CD8-positive, alpha-beta T cell (primary cell): ENCODE measurements at regions of chr2 and their contacts with region 1.

Region 1: DNA sequence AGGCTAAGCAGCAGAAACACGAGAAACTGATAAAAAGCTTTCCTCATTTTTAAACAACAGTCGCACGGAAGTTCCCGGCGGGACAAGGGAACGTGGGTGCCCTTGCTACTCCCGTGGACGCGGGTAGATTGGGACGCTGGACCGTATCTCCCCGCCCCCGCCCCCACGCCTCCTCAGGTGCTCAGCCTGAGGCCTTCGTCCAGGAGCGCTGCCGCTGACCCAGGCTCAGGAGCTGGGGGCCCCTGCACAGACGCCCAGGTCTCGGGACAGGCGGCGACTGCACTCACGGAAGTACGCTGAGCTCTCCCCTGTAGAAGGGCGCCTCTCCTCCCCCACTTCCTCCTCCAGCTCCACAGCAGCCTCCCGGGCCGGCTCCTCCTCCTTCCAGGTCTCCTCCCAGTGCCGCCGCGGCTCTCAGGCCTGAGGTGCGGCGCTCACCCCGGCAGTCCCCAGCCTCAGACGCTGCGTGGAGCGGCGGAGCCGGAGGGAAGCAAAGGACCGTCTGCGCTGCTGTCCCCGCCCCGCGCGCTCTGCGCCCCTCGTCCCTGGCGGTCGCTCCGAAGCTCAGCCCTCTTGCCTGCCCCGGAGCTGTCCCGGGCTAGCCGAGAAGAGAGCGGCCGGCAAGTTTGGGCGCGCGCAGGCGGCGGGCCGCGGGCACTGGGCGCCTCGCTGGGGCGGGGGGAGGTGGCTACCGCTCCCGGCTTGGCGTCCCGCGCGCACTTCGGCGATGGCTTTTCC is at the start of gene ITGAV:
- DNase-seq: peak; percentile 63 to 90 (median 80)
- ATAC-seq: peak; percentile 91
- H3K4me3 ChIP-seq: peak within 1 kb of the TSS; percentile 75 to 95
- H3K4me3 Mint-ChIP-seq: peak within 1 kb of the TSS; percentile 84
- H3K27ac ChIP-seq: peak within 1 kb of the TSS; percentile 41 to 81
- H3K27ac Mint-ChIP-seq: peak within 1 kb of the TSS; percentile 88
- H3K4me1 ChIP-seq: peaks cover 13% of the 10 kb centered on the region
- H3K4me1 Mint-ChIP-seq: peaks cover 32% of the 10 kb centered on the region
- H3K27me3 ChIP-seq: no peaks in the 10 kb centered on the region
- H3K27me3 Mint-ChIP-seq: peaks cover 2% of the 10 kb centered on the region
- CTCF ChIP-seq: no peak
- total RNA-seq, gene ITGAV: 3.6 to 4.9 TPM

Region 2: GRCh38 chr2:185676317-185676716 is 913.5 kb before region 1 on chr2:
- CTCF ChIA-PET with region 1: no interaction called
- POLR2A ChIA-PET with region 1: no interaction called
- intact Hi-C with region 1: no loop called
- DNase-seq: no peak
- ATAC-seq: no peak
- H3K4me3 ChIP-seq: no peak overlapping the region
- H3K4me3 Mint-ChIP-seq: no peak overlapping the region
- H3K27ac ChIP-seq: no peak overlapping the region
- H3K27ac Mint-ChIP-seq: no peak overlapping the region
- H3K4me1 ChIP-seq: no peaks in the 10 kb centered on the region
- H3K4me1 Mint-ChIP-seq: no peaks in the 10 kb centered on the region
- H3K27me3 ChIP-seq: no peaks in the 10 kb centered on the region
- H3K27me3 Mint-ChIP-seq: no peaks in the 10 kb centered on the region
- CTCF ChIP-seq: no peak

Region 3: GRCh38 chr2:186205254-186205911 is 384.4 kb before region 1 on chr2:
- CTCF ChIA-PET with region 1: no interaction called
- POLR2A ChIA-PET with region 1: no interaction called
- intact Hi-C with region 1: no loop called
- DNase-seq: no peak
- ATAC-seq: no peak
- H3K4me3 ChIP-seq: no peak overlapping the region
- H3K4me3 Mint-ChIP-seq: no peak overlapping the region
- H3K27ac ChIP-seq: no peak overlapping the region
- H3K27ac Mint-ChIP-seq: no peak overlapping the region
- H3K4me1 ChIP-seq: no peaks in the 10 kb centered on the region
- H3K4me1 Mint-ChIP-seq: peaks cover 2% of the 10 kb centered on the region
- H3K27me3 ChIP-seq: no peaks in the 10 kb centered on the region
- H3K27me3 Mint-ChIP-seq: no peaks in the 10 kb centered on the region
- CTCF ChIP-seq: no peak

Region 4: GRCh38 chr2:186485871-186486650 is 103.7 kb before region 1 on chr2 and contains the start of gene ZC3H15:
- CTCF ChIA-PET with region 1: no interaction called
- POLR2A ChIA-PET with region 1: interaction called, 16 read pairs
- intact Hi-C with region 1: loop called (anchors 1 to 5 kb)
- DNase-seq: peak; percentile 93 to 99 (median 96)
- ATAC-seq: peak; percentile 91
- H3K4me3 ChIP-seq: peak within 1 kb of the TSS; percentile 81 to 92
- H3K4me3 Mint-ChIP-seq: peak within 1 kb of the TSS; percentile 98
- H3K27ac ChIP-seq: peak within 1 kb of the TSS; percentile 95 to 96
- H3K27ac Mint-ChIP-seq: peak within 1 kb of the TSS; percentile 100
- H3K4me1 ChIP-seq: peaks cover 43% of the 10 kb centered on the region
- H3K4me1 Mint-ChIP-seq: peaks cover 69% of the 10 kb centered on the region
- H3K27me3 ChIP-seq: no peaks in the 10 kb centered on the region
- H3K27me3 Mint-ChIP-seq: no peaks in the 10 kb centered on the region
- CTCF ChIP-seq: no peak
- total RNA-seq, gene ZC3H15: 146 to 151 TPM

Region 5: DNA sequence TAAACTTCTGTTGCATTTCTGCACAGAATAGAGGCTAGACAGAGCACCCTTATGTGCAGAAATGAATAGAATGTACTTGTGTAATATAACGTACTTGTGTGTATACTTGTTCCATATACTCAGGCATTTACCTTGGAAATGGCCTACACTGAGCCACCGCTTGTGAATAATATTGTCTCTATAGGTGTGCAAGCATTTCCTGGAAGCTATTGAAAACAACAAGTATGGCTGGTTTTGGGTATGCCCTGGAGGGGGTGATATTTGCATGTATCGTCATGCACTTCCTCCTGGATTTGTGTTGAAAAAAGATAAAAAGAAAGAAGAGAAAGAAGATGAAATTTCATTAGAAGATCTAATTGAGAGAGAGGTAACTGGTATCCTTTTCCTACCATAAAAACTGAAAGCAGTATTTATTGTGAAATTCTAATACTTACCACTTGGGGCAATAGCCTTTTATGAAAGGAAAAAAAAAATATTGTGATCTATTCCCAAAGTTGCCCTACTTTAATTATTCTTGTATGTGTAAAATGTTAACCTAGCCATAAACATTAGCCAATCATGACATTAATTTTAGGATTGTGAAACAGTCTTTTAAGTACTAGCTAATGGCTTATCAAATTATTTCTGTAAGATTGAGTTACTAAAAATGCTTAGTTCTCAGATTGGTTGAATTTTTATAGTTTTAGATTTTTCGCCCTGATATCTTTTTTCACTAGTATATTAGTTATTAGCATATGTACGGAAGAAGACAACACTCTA is 85.8 kb before region 1 on chr2:
- CTCF ChIA-PET with region 1: no interaction called
- POLR2A ChIA-PET with region 1: interaction called, 3 read pairs
- intact Hi-C with region 1: loop called in 1 of 2 experiments (anchors 5 kb)
- DNase-seq: peak in 2 of 9 experiments; percentile 23 to 48
- ATAC-seq: peak; percentile 79
- H3K4me3 ChIP-seq: no peak overlapping the region
- H3K4me3 Mint-ChIP-seq: no peak overlapping the region
- H3K27ac ChIP-seq: no peak overlapping the region
- H3K27ac Mint-ChIP-seq: no peak overlapping the region
- H3K4me1 ChIP-seq: no peaks in the 10 kb centered on the region
- H3K4me1 Mint-ChIP-seq: peaks cover 10% of the 10 kb centered on the region
- H3K27me3 ChIP-seq: no peaks in the 10 kb centered on the region
- H3K27me3 Mint-ChIP-seq: no peaks in the 10 kb centered on the region
- CTCF ChIP-seq: peak; percentile 77

Region 6: GRCh38 chr2:186544255-186544675 is 45.5 kb before region 1 on chr2:
- CTCF ChIA-PET with region 1: no interaction called
- POLR2A ChIA-PET with region 1: interaction called, 3 read pairs
- intact Hi-C with region 1: loop called in 1 of 2 experiments (anchors 1 kb)
- DNase-seq: no peak
- ATAC-seq: no peak
- H3K4me3 ChIP-seq: no peak overlapping the region
- H3K4me3 Mint-ChIP-seq: no peak overlapping the region
- H3K27ac ChIP-seq: no peak overlapping the region
- H3K27ac Mint-ChIP-seq: no peak overlapping the region
- H3K4me1 ChIP-seq: no peaks in the 10 kb centered on the region
- H3K4me1 Mint-ChIP-seq: no peaks in the 10 kb centered on the region
- H3K27me3 ChIP-seq: no peaks in the 10 kb centered on the region
- H3K27me3 Mint-ChIP-seq: peaks cover 10% of the 10 kb centered on the region
- CTCF ChIP-seq: no peak

Region 7: GRCh38 chr2:186629250-186629996 is 39.6 kb after region 1 on chr2:
- CTCF ChIA-PET with region 1: no interaction called
- POLR2A ChIA-PET with region 1: no interaction called
- intact Hi-C with region 1: loop called in 1 of 2 experiments (anchors 5 kb)
- DNase-seq: no peak
- ATAC-seq: no peak
- H3K4me3 ChIP-seq: no peak overlapping the region
- H3K4me3 Mint-ChIP-seq: no peak overlapping the region
- H3K27ac ChIP-seq: no peak overlapping the region
- H3K27ac Mint-ChIP-seq: no peak overlapping the region
- H3K4me1 ChIP-seq: no peaks in the 10 kb centered on the region
- H3K4me1 Mint-ChIP-seq: no peaks in the 10 kb centered on the region
- H3K27me3 ChIP-seq: no peaks in the 10 kb centered on the region
- H3K27me3 Mint-ChIP-seq: no peaks in the 10 kb centered on the region
- CTCF ChIP-seq: no peak

Region 8: GRCh38 chr2:186641807-186642321 is 52.1 kb after region 1 on chr2:
- CTCF ChIA-PET with region 1: interaction called, 5 read pairs
- POLR2A ChIA-PET with region 1: no interaction called
- intact Hi-C with region 1: loop called in 1 of 2 experiments (anchors 2 kb)
- DNase-seq: peak in 6 of 9 experiments; percentile 9 to 62 (median 17)
- ATAC-seq: peak; percentile 73
- H3K4me3 ChIP-seq: no peak overlapping the region
- H3K4me3 Mint-ChIP-seq: no peak overlapping the region
- H3K27ac ChIP-seq: no peak overlapping the region
- H3K27ac Mint-ChIP-seq: no peak overlapping the region
- H3K4me1 ChIP-seq: no peaks in the 10 kb centered on the region
- H3K4me1 Mint-ChIP-seq: peaks cover 1% of the 10 kb centered on the region
- H3K27me3 ChIP-seq: no peaks in the 10 kb centered on the region
- H3K27me3 Mint-ChIP-seq: no peaks in the 10 kb centered on the region
- CTCF ChIP-seq: peak; percentile 59